Panc1 (cell line): ENCODE measurements at regions of chr1 and their contacts with region 1.

Region 1: GRCh38 chr1:12422488-12422887 is 192.7 kb downstream of the VPS13D start:
- DNase-seq: no peak
- ATAC-seq: no peak
- H3K4me3 ChIP-seq: no peak overlapping the region
- H3K27ac ChIP-seq: 0 out of 2 replicates have a peak overlapping the region, but pooled peaks have one; percentile 3
- H3K4me1 ChIP-seq: peaks cover 1% of the 10 kb centered on the region; the same call in 1 of the 2 replicates
- H3K27me3 ChIP-seq: no peaks in the 10 kb centered on the region
- CTCF ChIP-seq: peak; percentile 31; the same call in 1 of the 2 replicates

Region 2: DNA sequence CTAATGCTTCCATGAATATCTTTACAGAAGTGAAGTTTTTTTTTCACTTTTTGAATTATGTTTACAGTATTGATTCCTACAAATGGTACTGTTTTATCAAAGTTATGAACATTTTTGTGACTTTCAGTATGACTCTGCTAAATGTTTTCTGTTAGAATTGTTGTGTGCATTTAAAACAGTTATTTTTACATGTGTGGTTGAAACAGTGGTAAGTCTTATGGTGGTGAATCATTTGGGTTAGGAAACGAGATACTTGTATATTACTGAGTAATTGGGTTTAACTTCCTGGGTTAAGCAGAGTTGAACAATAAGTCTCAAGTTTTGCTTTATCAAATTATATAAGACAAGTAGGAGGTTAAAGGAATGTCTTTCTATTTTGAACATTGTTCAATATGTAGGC is 125.9 kb before region 1 on chr1:
- CTCF ChIA-PET with region 1: no interaction called
- POLR2A ChIA-PET with region 1: no interaction called
- in situ Hi-C with region 1: no loop called
- intact Hi-C with region 1: no loop called
- DNase-seq: no peak
- ATAC-seq: no peak
- H3K4me3 ChIP-seq: no peak overlapping the region
- H3K27ac ChIP-seq: no peak overlapping the region
- H3K4me1 ChIP-seq: no peaks in the 10 kb centered on the region
- H3K27me3 ChIP-seq: no peaks in the 10 kb centered on the region
- CTCF ChIP-seq: no peak

Region 3: DNA sequence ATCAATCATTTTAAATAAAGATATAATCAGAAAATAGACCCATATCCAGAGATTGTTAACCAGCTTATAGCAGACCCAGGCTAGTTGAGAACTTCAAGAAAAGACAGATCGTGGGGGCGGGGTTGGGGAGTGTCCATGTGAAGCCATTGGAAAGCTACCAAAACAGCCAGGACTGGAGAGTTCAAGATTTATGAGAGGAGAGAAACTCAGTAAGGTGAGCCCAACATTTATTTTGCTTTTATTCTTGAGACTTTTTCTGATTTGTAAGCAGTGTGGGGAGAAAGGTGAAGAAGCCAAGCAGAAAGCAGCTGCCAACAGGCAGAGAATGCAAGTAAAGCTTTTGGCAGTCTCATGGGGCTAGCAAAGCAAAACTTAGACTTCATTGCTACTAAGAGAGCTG is 12.8 kb before region 1 on chr1:
- CTCF ChIA-PET with region 1: interaction called, 10 read pairs
- POLR2A ChIA-PET with region 1: no interaction called
- in situ Hi-C with region 1: no loop called
- intact Hi-C with region 1: no loop called
- DNase-seq: no peak
- ATAC-seq: no peak
- H3K4me3 ChIP-seq: no peak overlapping the region
- H3K27ac ChIP-seq: peak overlapping the region; percentile 19; the same call in 1 of the 2 replicates
- H3K4me1 ChIP-seq: peaks cover 7% of the 10 kb centered on the region; the same call in 1 of the 2 replicates
- H3K27me3 ChIP-seq: no peaks in the 10 kb centered on the region
- CTCF ChIP-seq: no peak

Region 4: GRCh38 chr1:12549460-12550349 is 127.2 kb after region 1 on chr1:
- CTCF ChIA-PET with region 1: no interaction called
- POLR2A ChIA-PET with region 1: no interaction called
- in situ Hi-C with region 1: no loop called
- intact Hi-C with region 1: no loop called
- DNase-seq: peak; percentile 61
- ATAC-seq: peak; percentile 74
- H3K4me3 ChIP-seq: peak overlapping the region in 1 of 2 experiments; percentile 26; a peak in 2 of 4 replicates
- H3K27ac ChIP-seq: peak overlapping the region; percentile 71
- H3K4me1 ChIP-seq: peaks cover 44% of the 10 kb centered on the region
- H3K27me3 ChIP-seq: no peaks in the 10 kb centered on the region
- CTCF ChIP-seq: no peak

Region 5: DNA sequence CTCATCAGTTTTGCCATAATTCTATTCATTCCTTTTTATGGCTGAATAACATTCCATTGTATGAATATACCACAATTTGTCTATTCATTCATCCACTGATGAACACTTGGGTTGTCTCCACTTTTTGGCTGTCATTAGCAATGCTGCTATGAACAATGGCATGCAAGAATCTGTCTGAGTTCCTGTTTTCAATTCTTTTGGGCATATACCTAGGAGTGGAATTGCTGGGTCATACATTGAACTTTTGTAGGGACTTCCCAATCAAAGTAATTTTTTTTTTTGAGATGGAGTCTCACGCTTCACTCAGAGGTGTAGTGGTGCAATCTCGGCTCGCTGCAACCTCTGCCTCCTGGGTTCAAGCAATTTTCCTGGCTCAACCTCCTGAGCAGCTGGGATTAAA is 256.3 kb after region 1 on chr1:
- CTCF ChIA-PET with region 1: no interaction called
- POLR2A ChIA-PET with region 1: no interaction called
- in situ Hi-C with region 1: no loop called
- intact Hi-C with region 1: no loop called
- DNase-seq: no peak
- ATAC-seq: no peak
- H3K4me3 ChIP-seq: no peak overlapping the region
- H3K27ac ChIP-seq: no peak overlapping the region
- H3K4me1 ChIP-seq: no peaks in the 10 kb centered on the region
- H3K27me3 ChIP-seq: peaks cover 11% of the 10 kb centered on the region
- CTCF ChIP-seq: no peak